ENCODE measurements at regions of chr1 and their contacts with region 1.

Region 1: GRCh38 chr1:9942939-9943788 is at the starts of genes LZIC and NMNAT1:
- DNase-seq: peak; percentile 89 to 95
- H3K4me3 ChIP-seq: peak within 1 kb of the TSS; percentile 66 to 81
- H3K27ac ChIP-seq: peak within 1 kb of the TSS; percentile 76 to 83
- H3K4me1 ChIP-seq: peaks cover 0 to 24% (median 16%) of the 10 kb centered on the region in 4 donors
- H3K27me3 ChIP-seq: no peaks in the 10 kb centered on the region
- CTCF ChIP-seq: peak in 1 of 2 experiments; percentile 4

Region 2: DNA sequence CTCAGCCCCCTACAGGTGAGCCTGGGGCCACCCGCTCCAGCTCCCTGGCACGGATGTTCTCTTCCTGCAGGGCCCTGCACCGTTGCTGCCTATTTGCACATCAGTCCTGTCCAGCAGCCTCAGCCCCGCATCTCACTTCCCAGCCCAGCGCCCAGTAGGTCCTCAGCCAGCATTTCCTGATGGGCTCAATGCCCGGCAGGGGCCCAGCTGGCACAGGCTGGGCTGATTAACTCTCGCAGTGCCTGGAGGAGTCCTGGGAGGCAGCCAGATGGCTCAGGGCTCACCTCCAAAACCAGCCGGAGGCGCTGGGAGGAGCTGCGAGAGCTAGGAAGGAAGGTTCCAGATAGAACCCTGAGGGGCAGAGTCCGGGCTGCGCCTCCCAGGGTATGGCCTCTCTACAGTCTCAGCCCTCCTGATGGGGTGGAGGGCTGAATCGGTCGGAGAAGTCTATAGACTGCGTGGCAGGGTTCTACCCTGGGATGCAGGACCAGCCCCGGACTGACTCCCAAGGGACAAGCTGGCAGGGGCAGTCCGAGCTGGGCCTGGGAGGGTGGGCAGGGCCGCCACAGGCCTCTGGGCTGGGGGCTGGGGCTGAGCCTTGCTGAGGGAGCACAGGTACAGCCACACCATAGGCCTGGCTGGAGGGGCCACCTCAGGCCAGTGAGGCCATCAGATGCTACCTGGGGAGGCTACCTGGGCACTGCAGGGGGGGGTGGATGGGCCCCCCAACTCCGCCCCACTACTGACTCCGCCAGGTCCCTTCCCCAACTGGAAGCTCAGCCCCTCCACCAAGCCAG is 100.2 kb before region 1 on chr1:
- intact Hi-C with region 1: no loop called
- DNase-seq: no peak
- H3K4me3 ChIP-seq: no peak overlapping the region
- H3K27ac ChIP-seq: no peak overlapping the region
- H3K4me1 ChIP-seq: peaks cover 0 to 30% (median 15%) of the 10 kb centered on the region in 4 donors
- H3K27me3 ChIP-seq: peaks cover 0 to 4% of the 10 kb centered on the region in 2 donors
- CTCF ChIP-seq: no peak

Region 3: DNA sequence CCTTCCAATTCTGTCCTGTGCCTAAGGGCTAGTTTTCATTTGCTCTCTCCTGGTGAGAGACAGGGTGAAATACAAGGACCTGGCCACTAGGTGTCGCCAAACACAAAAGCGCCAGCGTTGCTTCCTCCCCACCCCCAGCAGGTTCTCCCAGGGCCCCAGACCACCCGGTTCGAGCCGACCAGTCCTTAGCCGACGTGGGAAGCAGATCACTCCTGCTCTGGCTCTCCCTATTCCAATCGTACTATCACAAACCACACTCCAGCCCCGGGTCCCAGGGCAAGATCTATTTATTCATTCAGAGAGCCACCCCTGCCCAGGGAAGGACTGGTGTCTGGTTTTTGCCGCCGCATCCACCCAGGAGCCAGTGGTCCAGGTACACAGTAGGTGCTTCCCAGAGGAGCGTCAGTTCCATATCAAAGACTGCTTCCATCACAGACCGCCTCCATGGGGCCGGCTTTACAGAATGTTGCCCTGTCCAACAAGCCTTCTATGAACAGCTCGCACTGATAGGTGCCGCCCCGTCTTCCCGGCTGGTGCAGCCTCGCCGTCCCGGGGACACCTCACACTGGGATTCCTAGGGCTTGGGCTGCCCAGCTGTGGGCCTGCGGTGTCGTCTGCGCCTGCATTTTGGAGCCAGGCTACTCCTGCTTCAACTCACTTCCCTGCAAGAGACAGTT is 68.1 kb before region 1 on chr1:
- intact Hi-C with region 1: loop called (anchors 5 kb)
- DNase-seq: peak; percentile 47 to 77
- H3K4me3 ChIP-seq: peak overlapping the region; percentile 18 to 24
- H3K27ac ChIP-seq: peak overlapping the region; percentile 42 to 60
- H3K4me1 ChIP-seq: peaks cover 0 to 17% (median 12%) of the 10 kb centered on the region in 4 donors
- H3K27me3 ChIP-seq: no peaks in the 10 kb centered on the region
- CTCF ChIP-seq: peak; percentile 92 to 94

Region 4: DNA sequence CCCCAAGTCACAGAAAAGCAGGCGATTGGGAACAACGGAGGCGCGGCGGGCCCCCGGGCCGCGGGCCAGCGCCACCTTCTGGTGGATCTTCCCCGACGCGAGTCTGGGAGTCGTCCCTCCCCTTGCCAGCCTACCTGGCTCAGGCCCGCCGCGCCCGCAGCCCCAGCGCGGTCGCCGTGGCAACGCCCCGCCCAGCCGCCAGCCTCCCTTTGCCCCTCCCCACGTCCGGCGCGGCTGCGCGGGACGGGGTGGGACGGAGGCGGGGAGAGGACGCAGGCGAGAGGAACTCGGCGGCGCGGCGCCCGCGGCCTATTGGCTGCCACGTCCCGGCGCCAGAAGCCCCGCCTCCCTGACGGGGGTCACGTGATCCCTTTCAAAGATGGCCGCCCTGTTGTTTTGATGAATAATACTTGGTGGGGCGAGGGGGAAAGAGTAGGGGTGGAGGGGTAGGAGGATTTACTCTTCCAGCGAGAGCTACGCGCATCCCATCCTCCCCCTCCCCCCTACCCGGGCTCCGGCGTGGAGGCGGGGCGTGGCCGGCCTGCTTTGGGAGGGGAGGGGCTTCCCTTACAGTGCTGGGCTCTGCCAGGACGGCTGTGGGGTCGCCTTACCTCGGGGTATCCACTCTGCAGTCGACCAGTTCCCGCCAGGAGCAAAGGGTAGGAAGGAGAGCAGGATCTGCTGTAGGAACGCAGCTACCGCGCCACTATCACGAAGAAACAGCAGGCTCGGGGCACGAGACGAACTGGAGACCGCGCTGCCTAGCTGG is 89.6 kb after region 1 on chr1 and contains the start of gene UBE4B:
- intact Hi-C with region 1: loop called (anchors 10 kb)
- DNase-seq: peak; percentile 97 to 99
- H3K4me3 ChIP-seq: peak within 1 kb of the TSS; percentile 82 to 100
- H3K27ac ChIP-seq: peak within 1 kb of the TSS; percentile 96 to 99
- H3K4me1 ChIP-seq: peaks cover 0 to 40% (median 13%) of the 10 kb centered on the region in 4 donors
- H3K27me3 ChIP-seq: no peaks in the 10 kb centered on the region
- CTCF ChIP-seq: peak; percentile 77 to 78

Region 5: DNA sequence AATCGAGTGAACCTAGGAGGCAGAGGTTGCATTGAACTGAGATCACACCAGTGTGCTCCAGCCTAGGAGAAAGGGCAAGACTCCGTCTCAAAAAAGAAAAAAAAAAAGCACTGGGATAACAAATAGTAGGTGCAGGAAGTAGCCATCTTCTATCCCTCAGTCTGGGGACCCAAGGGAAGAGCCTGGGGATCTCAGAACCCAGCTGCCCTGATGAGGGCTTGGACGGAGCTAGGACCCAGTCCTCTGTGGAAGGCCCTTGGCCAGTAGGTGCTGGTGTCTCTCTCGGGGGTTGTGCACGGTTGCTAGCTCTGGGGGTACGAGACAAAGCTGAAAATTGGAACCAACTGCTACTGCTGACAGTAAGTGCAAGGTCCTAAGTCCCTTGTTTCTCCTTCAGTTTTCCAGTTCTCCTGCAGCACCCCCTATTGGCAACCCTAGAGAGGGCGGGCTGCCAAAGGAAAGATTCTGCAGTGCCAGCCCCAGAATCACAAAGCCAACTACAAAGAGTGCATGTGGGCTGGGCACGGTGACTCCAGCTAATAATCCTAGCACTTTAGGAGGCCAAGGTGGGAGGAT is 209.6 kb after region 1 on chr1:
- intact Hi-C with region 1: loop called (anchors 5 kb)
- DNase-seq: peak; percentile 32 to 75
- H3K4me3 ChIP-seq: no peak overlapping the region
- H3K27ac ChIP-seq: peak overlapping the region in 1 of 2 donors; percentile 36
- H3K4me1 ChIP-seq: peaks cover 0 to 38% (median 9%) of the 10 kb centered on the region in 4 donors
- H3K27me3 ChIP-seq: no peaks in the 10 kb centered on the region
- CTCF ChIP-seq: peak; percentile 65 to 67

Region 6: GRCh38 chr1:10338047-10338446 is 394.9 kb after region 1 on chr1:
- intact Hi-C with region 1: loop called (anchors 10 kb)
- DNase-seq: peak in 1 of 2 donors; percentile 25
- H3K4me3 ChIP-seq: no peak overlapping the region
- H3K27ac ChIP-seq: no peak overlapping the region
- H3K4me1 ChIP-seq: no peaks in the 10 kb centered on the region
- H3K27me3 ChIP-seq: no peaks in the 10 kb centered on the region
- CTCF ChIP-seq: peak; percentile 60 to 62